HEK293 (cell line): ENCODE measurements at regions of chr9 and their contacts with region 1.

Region 1: DNA sequence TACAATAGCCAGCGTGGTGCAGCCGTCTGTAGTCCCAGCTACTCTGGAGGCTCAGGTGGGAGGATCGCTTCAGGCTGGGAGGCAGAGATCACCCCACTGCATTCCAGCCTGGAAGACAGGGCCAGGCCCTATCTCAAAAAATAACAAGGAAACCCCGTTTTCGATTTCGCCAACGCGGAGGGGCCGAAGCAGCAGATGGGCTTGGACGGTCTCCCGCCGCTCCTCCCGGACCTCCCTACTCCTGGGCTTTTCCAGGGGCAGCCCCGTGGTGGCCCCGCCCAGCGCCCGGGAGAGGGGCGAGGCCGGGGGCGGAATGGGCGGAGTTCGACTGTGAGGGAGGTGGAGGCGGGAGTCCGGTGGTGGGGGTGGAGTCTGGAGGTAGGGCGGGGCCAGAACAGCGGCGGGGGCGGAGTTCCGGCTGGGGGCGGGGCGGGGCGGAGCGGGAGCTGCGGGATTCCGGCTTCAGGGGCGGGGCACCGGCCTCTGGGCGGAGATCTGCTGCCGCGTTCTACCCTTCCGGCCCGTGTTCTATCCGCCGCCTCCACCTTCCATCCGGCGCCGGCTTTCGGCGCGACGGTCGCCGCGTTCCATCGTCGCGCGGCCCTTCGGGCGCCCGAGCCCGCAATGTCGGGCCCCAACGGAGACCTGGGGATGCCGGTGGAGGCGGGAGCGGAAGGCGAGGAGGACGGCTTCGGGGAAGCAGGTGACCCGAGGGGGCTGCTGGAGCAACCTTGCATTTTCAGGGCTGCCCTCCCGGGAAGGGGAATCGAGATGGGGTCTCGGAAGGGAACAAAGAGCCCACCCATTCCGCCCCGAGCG is at the start of gene BBLN:
- H3K4me3 ChIP-seq: peak within 1 kb of the TSS; percentile 60
- H3K27ac ChIP-seq: peak within 1 kb of the TSS; percentile 78
- H3K4me1 ChIP-seq: no peaks in the 10 kb centered on the region
- CTCF ChIP-seq: no peak

Region 2: DNA sequence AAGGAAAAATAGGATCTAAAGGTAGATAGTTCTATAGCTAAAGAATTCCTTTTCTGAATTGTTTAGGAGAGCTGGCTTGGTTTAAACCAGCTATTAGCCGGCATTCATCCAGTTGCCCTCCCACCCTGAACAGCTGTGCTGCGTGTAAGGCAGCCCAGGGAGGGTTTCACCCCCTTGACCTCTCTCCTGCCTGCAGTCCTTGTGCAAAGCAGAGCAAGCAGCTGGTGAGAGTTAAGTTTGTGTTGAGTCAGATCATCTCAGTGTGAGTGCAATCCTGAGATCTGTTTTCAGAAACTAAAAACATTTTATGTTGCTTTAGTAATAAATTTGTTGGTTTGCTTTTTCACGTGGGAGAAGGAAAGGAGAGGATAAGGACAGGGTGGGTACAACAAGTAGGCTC is 78.9 kb before region 1 on chr9:
- CTCF ChIA-PET with region 1: no interaction called
- POLR2A ChIA-PET with region 1: no interaction called
- H3K4me3 ChIP-seq: no peak overlapping the region
- H3K27ac ChIP-seq: no peak overlapping the region
- H3K4me1 ChIP-seq: no peaks in the 10 kb centered on the region
- CTCF ChIP-seq: no peak

Region 3: DNA sequence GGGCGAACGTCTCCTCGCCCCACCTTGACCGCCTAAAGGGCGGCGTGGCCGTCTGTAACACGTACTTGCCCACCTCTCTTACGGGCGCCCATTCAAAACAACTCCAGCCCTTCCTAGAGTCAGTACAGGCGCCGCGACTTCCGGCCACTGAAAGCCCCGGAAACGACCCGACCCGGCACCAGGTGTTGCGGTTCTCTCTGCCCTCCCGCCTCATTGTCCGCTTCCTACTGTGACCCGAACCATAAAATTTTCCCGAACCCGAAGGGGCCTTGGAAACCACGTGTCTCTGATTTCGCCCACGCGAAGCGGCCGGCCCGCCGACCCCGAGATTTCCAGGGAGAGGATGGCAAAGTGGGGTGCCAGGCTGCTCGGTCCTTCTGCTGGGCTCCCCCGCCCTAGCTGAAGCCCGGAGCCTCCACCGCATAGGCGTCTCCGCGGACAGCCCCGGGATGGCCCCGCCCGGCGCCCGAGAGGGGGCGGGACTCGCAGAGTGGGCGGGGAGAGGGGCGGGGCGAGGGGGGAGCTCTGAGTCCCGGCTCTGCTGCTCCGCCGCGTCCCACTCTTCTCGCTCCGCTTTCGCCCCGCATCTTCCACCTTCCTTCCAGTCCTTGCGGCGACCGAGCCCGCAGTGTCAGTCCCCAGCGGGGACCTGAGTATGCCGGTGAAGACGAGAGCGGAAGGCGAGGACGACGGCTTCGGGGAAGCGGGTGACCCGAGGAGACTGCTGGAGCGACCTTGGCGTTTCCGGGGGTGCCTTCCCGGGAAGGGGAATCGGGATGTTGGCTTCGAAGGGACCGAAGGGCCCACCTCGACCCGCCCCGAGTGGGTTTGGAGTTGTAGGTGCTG is 31.8 kb before region 1 on chr9:
- CTCF ChIA-PET with region 1: interaction called, 3 read pairs
- POLR2A ChIA-PET with region 1: interaction called, 10 read pairs
- H3K4me3 ChIP-seq: peak overlapping the region; percentile 83
- H3K27ac ChIP-seq: peak overlapping the region; percentile 85
- H3K4me1 ChIP-seq: no peaks in the 10 kb centered on the region
- CTCF ChIP-seq: 0 out of 2 replicates have a peak, but pooled peaks have one; percentile 5

Region 4: GRCh38 chr9:128296337-128297220 is 136.6 kb after region 1 on chr9:
- CTCF ChIA-PET with region 1: no interaction called
- POLR2A ChIA-PET with region 1: interaction called, 10 read pairs
- H3K4me3 ChIP-seq: no peak overlapping the region
- H3K27ac ChIP-seq: no peak overlapping the region
- H3K4me1 ChIP-seq: no peaks in the 10 kb centered on the region
- CTCF ChIP-seq: no peak

Region 5: GRCh38 chr9:128406848-128407391 is 246.9 kb after region 1 on chr9:
- CTCF ChIA-PET with region 1: no interaction called
- POLR2A ChIA-PET with region 1: no interaction called
- H3K4me3 ChIP-seq: no peak overlapping the region
- H3K27ac ChIP-seq: no peak overlapping the region
- H3K4me1 ChIP-seq: no peaks in the 10 kb centered on the region
- CTCF ChIP-seq: no peak